Transverse colon (tissue), 4 donors: ENCODE measurements at regions of chr12 and their contacts with region 1.

Region 1: DNA sequence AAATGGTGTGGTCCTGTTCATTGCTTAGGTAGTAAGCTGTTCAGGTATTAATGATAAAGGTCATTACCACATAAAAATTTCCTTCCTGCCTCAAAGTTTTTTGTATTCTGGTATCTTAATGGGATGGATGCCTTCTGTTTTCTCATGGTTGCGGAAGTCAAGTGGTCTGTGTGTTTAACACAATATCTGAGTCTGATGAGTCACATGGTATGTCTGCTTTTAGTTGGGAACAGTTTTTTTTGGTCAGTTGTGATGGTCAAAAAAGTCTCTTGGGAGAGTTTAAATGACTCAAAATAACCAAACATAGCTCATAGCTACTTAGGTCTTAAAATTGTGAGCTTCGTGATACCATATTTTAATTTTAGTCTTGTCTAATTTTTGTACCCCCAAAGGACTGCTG is 40.7 kb downstream of the STK38L start:
- DNase-seq: no peak
- H3K4me3 ChIP-seq: no peak overlapping the region
- H3K27ac ChIP-seq: peak overlapping the region in 3 of 4 donors; percentile 24 to 38 (median 32)
- H3K4me1 ChIP-seq: peaks cover 7 to 46% (median 32%) of the 10 kb centered on the region in 4 donors
- H3K27me3 ChIP-seq: no peaks in the 10 kb centered on the region
- CTCF ChIP-seq: no peak
- EP300 ChIP-seq: no peak
- POLR2A ChIP-seq: no peak

Region 2: GRCh38 chr12:26402648-26403047 is 882.1 kb before region 1 on chr12:
- in situ Hi-C with region 1: no loop called
- intact Hi-C with region 1: loop called (anchors 5 kb)
- DNase-seq: peak; percentile 46
- H3K4me3 ChIP-seq: no peak overlapping the region
- H3K27ac ChIP-seq: no peak overlapping the region
- H3K4me1 ChIP-seq: no peaks in the 10 kb centered on the region
- H3K27me3 ChIP-seq: no peaks in the 10 kb centered on the region
- CTCF ChIP-seq: peak; percentile 28 to 68 (median 45)
- EP300 ChIP-seq: no peak
- POLR2A ChIP-seq: no peak